Activated naive CD8-positive, alpha-beta T cell treated with anti-CD3 and anti-CD28 coated beads, Interleukin-2, amount 10 ng/mL, durations not matched to agents 7 days and 5 days (primary cell): ENCODE measurements at regions of chr1 and their contacts with region 1.

Region 1: GRCh38 chr1:27940297-27940696 is 5.5 kb downstream of the SMPDL3B start:
- DNase-seq: peak; percentile 65
- ATAC-seq: peak; percentile 75
- H3K4me3 Mint-ChIP-seq: no peak overlapping the region
- H3K27ac Mint-ChIP-seq: peak overlapping the region; percentile 75
- H3K4me1 Mint-ChIP-seq: peaks cover 36% of the 10 kb centered on the region
- H3K27me3 Mint-ChIP-seq: peaks cover 9% of the 10 kb centered on the region

Region 2: GRCh38 chr1:27959400-27960217 is 19.3 kb after region 1 on chr1 and contains the start of gene XKR8:
- POLR2A ChIA-PET with region 1: interaction called, 10 read pairs
- DNase-seq: peak; percentile 91
- ATAC-seq: peak; percentile 99
- H3K4me3 Mint-ChIP-seq: peak within 1 kb of the TSS; percentile 85
- H3K27ac Mint-ChIP-seq: peak within 1 kb of the TSS; percentile 88
- H3K4me1 Mint-ChIP-seq: peaks cover 18% of the 10 kb centered on the region
- H3K27me3 Mint-ChIP-seq: peaks cover 6% of the 10 kb centered on the region
- total RNA-seq, gene XKR8: 8.7 to 9.0 TPM